ENCODE measurements at regions of chr2 and their contacts with region 1.

Region 1: DNA sequence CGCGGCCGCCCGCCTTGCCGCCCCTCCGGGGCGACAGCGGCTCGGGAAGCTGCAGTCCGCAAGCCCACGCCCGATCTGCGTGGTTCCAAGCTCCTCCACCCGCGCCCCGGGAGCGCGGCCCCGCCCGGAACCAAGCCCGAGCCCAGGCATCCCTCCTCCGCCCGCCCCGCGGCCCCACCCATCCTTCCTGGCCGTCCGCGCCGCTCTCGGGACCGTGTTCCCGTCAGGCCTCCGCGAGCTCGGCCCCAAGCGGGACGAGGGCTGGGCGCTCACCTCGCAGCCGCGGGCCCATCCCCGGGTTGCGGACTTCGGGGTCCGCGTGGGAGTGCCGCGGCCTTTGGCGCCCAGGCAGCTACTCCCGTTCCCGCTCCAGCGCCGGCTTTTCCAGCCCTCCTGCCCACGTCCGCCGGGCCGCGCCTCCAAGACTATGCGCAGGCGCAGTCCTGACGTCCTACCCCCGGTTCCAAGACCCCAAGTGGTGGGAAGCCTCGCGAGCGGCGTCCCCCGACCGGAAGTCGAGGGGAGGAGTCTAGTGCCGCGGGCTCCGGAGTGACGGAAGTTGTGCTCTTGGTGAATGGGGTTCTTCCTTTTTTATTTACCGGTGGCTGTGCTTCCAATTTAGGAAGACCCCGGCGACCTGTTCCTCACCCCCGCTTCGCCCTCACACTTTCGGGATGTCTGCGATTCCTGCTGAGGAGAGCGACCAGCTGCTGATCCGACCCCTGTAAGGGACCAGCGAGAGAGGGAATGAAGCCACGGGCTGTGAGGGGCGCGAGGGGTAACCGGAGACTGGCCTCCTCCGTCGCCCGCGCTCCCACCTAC is at the starts of genes CPSF3 and ITGB1BP1:
- DNase-seq: peak; percentile 98
- ATAC-seq: peak; percentile 86
- H3K4me3 ChIP-seq: peak within 1 kb of the TSS; percentile 96
- H3K27ac ChIP-seq: peak within 1 kb of the TSS; percentile 61
- H3K4me1 ChIP-seq: peaks cover 18% of the 10 kb centered on the region
- H3K27me3 ChIP-seq: no peaks in the 10 kb centered on the region
- CTCF ChIP-seq: no peak
- total RNA-seq, gene CPSF3: 42.6 and 60.1 TPM in 2 replicates
- total RNA-seq, gene ITGB1BP1: 77.6 and 78.5 TPM in 2 replicates

Region 2: GRCh38 chr2:9477914-9478313 is 54.6 kb after region 1 on chr2:
- CTCF ChIA-PET with region 1: no interaction called
- POLR2A ChIA-PET with region 1: no interaction called
- intact Hi-C with region 1: loop called (anchors 5 kb)
- DNase-seq: no peak
- ATAC-seq: no peak
- H3K4me3 ChIP-seq: no peak overlapping the region
- H3K27ac ChIP-seq: no peak overlapping the region
- H3K4me1 ChIP-seq: peaks cover 12% of the 10 kb centered on the region; the same call in 1 of the 2 replicates
- H3K27me3 ChIP-seq: no peaks in the 10 kb centered on the region
- CTCF ChIP-seq: no peak

Region 3: GRCh38 chr2:9488583-9489547 is 65.6 kb after region 1 on chr2:
- CTCF ChIA-PET with region 1: no interaction called
- POLR2A ChIA-PET with region 1: no interaction called
- intact Hi-C with region 1: no loop called
- DNase-seq: no peak
- ATAC-seq: peak; percentile 70
- H3K4me3 ChIP-seq: no peak overlapping the region
- H3K27ac ChIP-seq: no peak overlapping the region
- H3K4me1 ChIP-seq: peaks cover 6% of the 10 kb centered on the region; the same call in 1 of the 2 replicates
- H3K27me3 ChIP-seq: no peaks in the 10 kb centered on the region
- CTCF ChIP-seq: no peak